Natural killer cell (primary cell): ENCODE measurements at regions of chr5 and their contacts with region 1.

Region 1: DNA sequence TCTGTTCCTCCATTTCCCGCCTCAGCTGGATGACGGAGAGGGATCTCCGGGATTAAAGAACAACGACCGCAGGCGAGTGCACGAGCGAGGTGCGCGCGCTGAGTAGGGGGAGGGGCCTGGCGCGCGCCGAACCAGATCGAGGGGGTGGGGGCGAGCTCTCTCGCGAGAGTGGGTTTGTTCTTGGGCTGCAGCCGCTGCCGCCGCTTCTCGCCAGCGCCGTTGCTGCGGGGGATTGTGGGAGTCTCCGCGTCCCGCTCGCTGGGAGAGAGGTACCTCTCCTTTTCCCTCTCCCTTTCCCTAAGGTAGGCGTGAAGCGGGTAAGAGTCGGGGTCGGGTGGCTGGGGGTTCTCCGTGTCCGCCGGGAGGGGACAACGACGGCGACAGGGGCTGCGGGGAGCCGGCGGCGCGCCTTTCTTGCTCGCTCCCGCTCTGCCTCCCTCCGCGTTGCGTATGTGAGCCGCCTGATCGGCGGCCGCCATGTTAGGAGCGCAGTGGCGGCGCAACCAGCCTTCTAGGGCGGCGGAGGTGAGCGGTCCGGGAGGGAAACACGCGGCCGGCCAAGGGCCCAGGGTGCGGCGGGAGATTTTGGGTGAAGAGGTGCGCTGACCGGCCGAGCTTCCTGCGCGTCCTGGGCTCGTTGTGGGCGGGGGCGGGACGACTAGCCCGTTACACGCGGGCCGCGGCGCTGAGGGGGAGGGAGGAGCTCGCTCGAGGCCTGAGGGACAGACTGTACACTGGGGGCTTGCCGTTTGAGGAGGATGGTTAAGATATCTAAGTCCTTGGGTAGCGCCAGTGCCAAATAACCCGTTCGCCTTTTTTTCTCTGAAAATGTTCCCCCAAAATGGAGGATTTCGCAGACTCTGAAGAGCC is at the start of gene MATR3:
- DNase-seq: peak; percentile 90 to 95
- ATAC-seq: peak; percentile 87 to 94 (median 88)
- H3K4me3 ChIP-seq: peak within 1 kb of the TSS; percentile 96
- H3K4me3 Mint-ChIP-seq: peak within 1 kb of the TSS; percentile 96
- H3K27ac ChIP-seq: peak within 1 kb of the TSS; percentile 99
- H3K27ac Mint-ChIP-seq: peak within 1 kb of the TSS; percentile 96 to 99
- H3K4me1 ChIP-seq: peaks cover 26% of the 10 kb centered on the region
- H3K4me1 Mint-ChIP-seq: peaks cover 46 to 51% of the 10 kb centered on the region in 2 donors
- H3K27me3 ChIP-seq: no peaks in the 10 kb centered on the region
- H3K27me3 Mint-ChIP-seq: no peaks in the 10 kb centered on the region
- CTCF ChIP-seq: no peak
- total RNA-seq, gene MATR3: 290 to 324 (median 297) TPM

Region 2: GRCh38 chr5:138575194-138576015 is 718.3 kb before region 1 on chr5 and contains the start of gene HSPA9:
- intact Hi-C with region 1: loop called (anchors 10 kb)
- DNase-seq: peak; percentile 95 to 100
- ATAC-seq: peak; percentile 79 to 92 (median 85)
- H3K4me3 ChIP-seq: peak within 1 kb of the TSS; percentile 86
- H3K4me3 Mint-ChIP-seq: peak within 1 kb of the TSS; percentile 98
- H3K27ac ChIP-seq: peak within 1 kb of the TSS; percentile 98
- H3K27ac Mint-ChIP-seq: peak within 1 kb of the TSS; percentile 100
- H3K4me1 ChIP-seq: peaks cover 18% of the 10 kb centered on the region
- H3K4me1 Mint-ChIP-seq: peaks cover 21 to 33% of the 10 kb centered on the region in 2 donors
- H3K27me3 ChIP-seq: no peaks in the 10 kb centered on the region
- H3K27me3 Mint-ChIP-seq: no peaks in the 10 kb centered on the region
- CTCF ChIP-seq: no peak
- total RNA-seq, gene HSPA9: 272 to 308 (median 308) TPM

Region 3: DNA sequence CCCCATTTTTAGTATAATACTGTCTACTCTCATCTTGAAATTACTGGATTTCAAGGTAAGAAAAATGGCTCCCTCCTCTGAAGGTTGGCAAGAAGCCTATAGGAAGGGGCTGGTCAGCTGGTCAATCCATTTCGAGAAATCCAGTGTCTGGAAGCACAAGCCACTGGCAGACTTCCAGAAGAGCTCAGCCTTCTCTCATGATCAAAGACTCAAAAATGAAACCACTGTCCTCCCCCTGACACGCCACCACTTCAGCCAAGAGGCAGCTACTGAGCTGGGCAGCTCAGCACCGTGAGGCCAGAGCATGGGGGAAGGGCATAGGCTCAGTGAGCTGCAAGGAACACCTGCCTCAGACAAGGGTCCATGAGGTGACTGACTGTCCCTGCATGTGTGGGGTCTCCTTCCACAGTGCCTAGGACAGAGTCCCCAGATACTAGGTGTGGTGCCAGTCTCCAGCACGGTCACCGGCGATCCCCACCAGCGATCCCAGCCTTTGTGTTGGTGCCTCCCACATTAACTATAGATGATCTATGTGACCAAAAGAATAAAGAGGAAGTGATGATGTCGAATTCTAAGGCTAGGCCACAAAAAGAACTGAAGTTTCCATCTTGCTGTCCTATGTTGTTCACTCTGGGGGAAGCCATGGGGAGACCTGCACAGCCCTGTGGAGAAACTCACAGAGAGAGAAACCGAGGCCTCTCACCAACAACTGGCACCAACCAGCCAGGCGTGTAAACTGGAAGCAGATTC is 318.5 kb before region 1 on chr5:
- intact Hi-C with region 1: no loop called
- DNase-seq: no peak
- ATAC-seq: no peak
- H3K4me3 ChIP-seq: no peak overlapping the region
- H3K4me3 Mint-ChIP-seq: no peak overlapping the region
- H3K27ac ChIP-seq: no peak overlapping the region
- H3K27ac Mint-ChIP-seq: no peak overlapping the region
- H3K4me1 ChIP-seq: peaks cover 10% of the 10 kb centered on the region
- H3K4me1 Mint-ChIP-seq: peaks cover 11 to 22% of the 10 kb centered on the region in 2 donors
- H3K27me3 ChIP-seq: no peaks in the 10 kb centered on the region
- H3K27me3 Mint-ChIP-seq: no peaks in the 10 kb centered on the region
- CTCF ChIP-seq: no peak

Region 4: GRCh38 chr5:139193928-139194327 is 99.8 kb before region 1 on chr5:
- intact Hi-C with region 1: no loop called
- DNase-seq: peak in 1 of 2 donors; percentile 32
- ATAC-seq: no peak
- H3K4me3 ChIP-seq: no peak overlapping the region
- H3K4me3 Mint-ChIP-seq: no peak overlapping the region
- H3K27ac ChIP-seq: no peak overlapping the region
- H3K27ac Mint-ChIP-seq: peak overlapping the region; percentile 5 to 36
- H3K4me1 ChIP-seq: peaks cover 17% of the 10 kb centered on the region
- H3K4me1 Mint-ChIP-seq: peaks cover 28% of the 10 kb centered on the region in 2 donors
- H3K27me3 ChIP-seq: no peaks in the 10 kb centered on the region
- H3K27me3 Mint-ChIP-seq: no peaks in the 10 kb centered on the region
- CTCF ChIP-seq: no peak

Region 5: DNA sequence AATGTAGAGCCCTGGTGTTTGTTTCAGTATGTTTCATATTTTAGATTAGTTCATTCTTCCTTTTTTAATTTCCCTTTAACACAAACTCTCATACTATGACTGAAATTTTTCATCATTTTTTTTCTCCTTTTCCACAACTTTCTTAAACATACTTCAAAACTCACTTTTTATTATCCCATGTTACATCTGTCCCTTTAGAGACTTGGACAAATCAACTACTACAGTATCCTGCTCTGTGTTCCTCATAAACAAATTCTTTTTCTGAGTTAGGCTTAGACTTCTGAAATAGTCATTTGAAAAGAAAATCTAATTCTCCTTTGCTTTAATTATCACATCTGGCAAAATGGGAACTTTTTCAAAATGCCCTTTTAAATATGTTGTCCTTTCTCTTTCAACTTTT is 15.1 kb after region 1 on chr5:
- intact Hi-C with region 1: loop called (anchors 2 kb)
- DNase-seq: no peak
- ATAC-seq: no peak
- H3K4me3 ChIP-seq: no peak overlapping the region
- H3K4me3 Mint-ChIP-seq: peak overlapping the region; percentile 11
- H3K27ac ChIP-seq: no peak overlapping the region
- H3K27ac Mint-ChIP-seq: peak overlapping the region; percentile 16 to 34
- H3K4me1 ChIP-seq: peaks cover 25% of the 10 kb centered on the region
- H3K4me1 Mint-ChIP-seq: peaks cover 72 to 76% of the 10 kb centered on the region in 2 donors
- H3K27me3 ChIP-seq: no peaks in the 10 kb centered on the region
- H3K27me3 Mint-ChIP-seq: no peaks in the 10 kb centered on the region
- CTCF ChIP-seq: no peak

Region 6: DNA sequence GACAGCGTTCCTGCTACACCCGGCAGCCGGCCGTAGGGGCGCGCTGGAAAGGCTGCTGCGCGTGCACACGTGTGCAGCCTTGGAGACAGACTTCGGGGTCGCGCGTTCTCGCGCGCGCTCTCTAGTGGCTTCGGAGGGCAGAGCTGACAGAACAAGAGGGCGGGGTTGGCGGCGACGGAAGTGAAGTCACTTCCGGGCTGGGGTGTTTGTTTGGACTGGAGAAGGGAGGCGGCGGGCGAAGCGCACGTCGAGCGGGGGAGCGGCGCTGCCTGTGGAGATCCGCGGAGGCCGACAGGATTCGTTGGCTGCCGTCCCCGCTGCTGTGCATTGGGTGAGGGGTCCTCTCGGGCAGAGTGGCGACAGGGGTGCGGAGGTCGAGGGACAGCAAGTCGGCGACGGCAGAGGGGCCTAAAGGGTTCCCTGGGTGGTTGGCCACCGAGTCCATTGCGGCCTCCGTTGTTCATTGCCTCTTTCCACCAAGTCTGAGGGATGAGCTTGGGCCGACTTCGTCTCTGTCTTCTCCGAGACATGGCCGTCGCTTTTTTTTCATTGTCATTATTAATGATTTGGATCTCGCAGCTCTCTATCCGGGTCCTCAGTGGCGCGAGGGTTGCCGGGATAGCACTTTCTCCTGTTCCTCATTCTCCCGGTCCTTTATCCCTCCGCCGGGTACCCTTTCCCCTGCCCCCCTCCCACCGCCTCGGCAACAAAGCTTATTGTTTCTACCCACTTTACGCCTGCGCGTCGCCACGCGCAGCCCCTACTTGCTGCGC is 48.1 kb after region 1 on chr5 and contains the start of gene PAIP2:
- intact Hi-C with region 1: loop called (anchors 1 kb)
- DNase-seq: peak; percentile 96 to 99
- ATAC-seq: peak; percentile 88 to 97 (median 92)
- H3K4me3 ChIP-seq: peak within 1 kb of the TSS; percentile 91
- H3K4me3 Mint-ChIP-seq: peak within 1 kb of the TSS; percentile 96
- H3K27ac ChIP-seq: peak within 1 kb of the TSS; percentile 97
- H3K27ac Mint-ChIP-seq: peak within 1 kb of the TSS; percentile 95 to 98
- H3K4me1 ChIP-seq: peaks cover 21% of the 10 kb centered on the region
- H3K4me1 Mint-ChIP-seq: peaks cover 41 to 47% of the 10 kb centered on the region in 2 donors
- H3K27me3 ChIP-seq: no peaks in the 10 kb centered on the region
- H3K27me3 Mint-ChIP-seq: no peaks in the 10 kb centered on the region
- CTCF ChIP-seq: peak; percentile 67
- total RNA-seq, gene PAIP2: 105 to 126 (median 110) TPM

Region 7: GRCh38 chr5:139392678-139393496 is 99.1 kb after region 1 on chr5:
- intact Hi-C with region 1: loop called (anchors 2 kb)
- DNase-seq: peak; percentile 74 to 87
- ATAC-seq: peak; percentile 61 to 80 (median 67)
- H3K4me3 ChIP-seq: peak overlapping the region; percentile 62
- H3K4me3 Mint-ChIP-seq: peak overlapping the region; percentile 88
- H3K27ac ChIP-seq: peak overlapping the region; percentile 17
- H3K27ac Mint-ChIP-seq: peak overlapping the region; percentile 62 to 95
- H3K4me1 ChIP-seq: peaks cover 62% of the 10 kb centered on the region
- H3K4me1 Mint-ChIP-seq: peaks cover 39 to 47% of the 10 kb centered on the region in 2 donors
- H3K27me3 ChIP-seq: no peaks in the 10 kb centered on the region
- H3K27me3 Mint-ChIP-seq: no peaks in the 10 kb centered on the region
- CTCF ChIP-seq: peak; percentile 69

Region 8: DNA sequence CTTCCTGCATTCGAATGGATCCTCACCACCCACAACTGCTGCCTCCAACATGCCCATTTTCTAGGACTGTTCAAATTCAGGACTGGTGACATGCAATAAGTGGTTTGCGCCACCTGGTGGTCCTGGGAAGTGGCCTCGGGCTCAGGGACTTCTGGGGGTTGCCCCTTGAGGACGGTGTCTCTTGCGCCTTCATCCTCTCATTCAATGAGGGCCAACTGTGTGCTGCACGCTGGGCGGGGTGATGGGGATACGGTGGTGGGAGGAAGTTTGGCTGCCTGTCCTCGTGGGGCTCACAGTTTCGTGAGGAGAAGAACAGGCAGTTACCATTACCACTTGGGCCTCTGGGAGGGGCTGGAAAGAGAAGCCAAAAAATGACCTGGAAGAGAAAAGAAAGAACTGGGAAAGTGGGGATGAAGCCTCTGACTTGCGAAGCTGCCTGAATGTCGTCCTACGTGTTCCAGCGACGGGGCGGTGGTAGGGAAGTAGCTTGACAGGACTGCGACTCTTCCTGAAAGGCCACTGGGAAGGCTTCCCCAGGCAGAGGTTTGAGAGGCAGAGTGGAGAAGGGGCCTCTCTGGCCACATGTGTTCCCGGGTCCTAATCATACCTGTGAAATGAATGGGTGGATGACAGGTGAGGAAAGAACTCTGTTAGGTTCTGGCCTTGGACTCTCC is 550.9 kb after region 1 on chr5:
- intact Hi-C with region 1: loop called (anchors 10 kb)
- DNase-seq: peak; percentile 63 to 83
- ATAC-seq: no peak
- H3K4me3 ChIP-seq: no peak overlapping the region
- H3K4me3 Mint-ChIP-seq: peak overlapping the region; percentile 21
- H3K27ac ChIP-seq: no peak overlapping the region
- H3K27ac Mint-ChIP-seq: no peak overlapping the region
- H3K4me1 ChIP-seq: peaks cover 14% of the 10 kb centered on the region
- H3K4me1 Mint-ChIP-seq: peaks cover 11 to 21% of the 10 kb centered on the region in 2 donors
- H3K27me3 ChIP-seq: peaks cover 4% of the 10 kb centered on the region
- H3K27me3 Mint-ChIP-seq: peaks cover 0 to 2% of the 10 kb centered on the region in 2 donors
- CTCF ChIP-seq: peak; percentile 65